ENCODE measurements at regions of chr10 and their contacts with region 1.

Region 1: GRCh38 chr10:48399056-48399541 is 92.6 kb downstream of the MAPK8 start:
- DNase-seq: no peak
- H3K4me3 ChIP-seq: no peak overlapping the region
- H3K27ac ChIP-seq: no peak overlapping the region
- H3K27me3 ChIP-seq: no peaks in the 10 kb centered on the region
- CTCF ChIP-seq: no peak

Region 2: DNA sequence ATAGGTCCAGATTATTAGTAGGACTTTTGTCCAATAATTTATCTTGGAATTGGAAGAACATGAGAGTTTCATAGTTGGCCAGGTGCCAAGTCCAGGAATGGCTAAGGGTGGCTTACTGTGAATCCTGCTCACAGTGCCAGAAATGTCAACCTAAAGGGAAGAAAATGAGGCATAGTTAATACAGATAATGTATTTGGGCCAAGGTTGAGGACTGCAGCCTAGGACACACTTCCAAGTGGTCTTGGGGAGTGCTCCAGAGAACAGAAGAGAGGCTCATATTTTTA is 14.5 kb before region 1 on chr10:
- CTCF ChIA-PET with region 1: interaction called, 16 read pairs
- POLR2A ChIA-PET with region 1: no interaction called
- DNase-seq: no peak
- H3K4me3 ChIP-seq: no peak overlapping the region
- H3K27ac ChIP-seq: no peak overlapping the region
- H3K27me3 ChIP-seq: no peaks in the 10 kb centered on the region
- CTCF ChIP-seq: no peak

Region 3: GRCh38 chr10:48579251-48579960 is 180.3 kb after region 1 on chr10:
- CTCF ChIA-PET with region 1: no interaction called
- POLR2A ChIA-PET with region 1: no interaction called
- DNase-seq: peak; percentile 18
- H3K4me3 ChIP-seq: no peak overlapping the region
- H3K27ac ChIP-seq: peak overlapping the region; percentile 33
- H3K27me3 ChIP-seq: no peaks in the 10 kb centered on the region
- CTCF ChIP-seq: no peak